K562 (cell line): ENCODE measurements at regions of chr6 and their contacts with region 1.

Region 1: GRCh38 chr6:130020907-130021629 is 2.7 kb downstream of the L3MBTL3 start:
- DNase-seq: peak; percentile 55 to 90 (median 57)
- ATAC-seq: peak; percentile 83
- H3K4me3 ChIP-seq: peak overlapping the region; percentile 60
- H3K27ac ChIP-seq: peak overlapping the region; percentile 62; the same call in 1 of the 3 replicates
- H3K4me1 ChIP-seq: peaks cover 0 to 15% of the 10 kb centered on the region in 2 experiments; a peak in 2 of 5 replicates
- H3K27me3 ChIP-seq: no peaks in the 10 kb centered on the region
- CTCF ChIP-seq: peak; percentile 77 to 92 (median 86)
- EP300 ChIP-seq: no peak
- POLR2A ChIP-seq: no peak
- RAD21 ChIP-seq: peak; percentile 87 to 88

Region 2: GRCh38 chr6:129644567-129645015 is 376.5 kb before region 1 on chr6:
- CTCF ChIA-PET with region 1: no interaction called
- POLR2A ChIA-PET with region 1: no interaction called
- in situ Hi-C with region 1: no loop called
- intact Hi-C with region 1: no loop called
- DNase-seq: no peak
- ATAC-seq: no peak
- H3K4me3 ChIP-seq: no peak overlapping the region
- H3K27ac ChIP-seq: no peak overlapping the region
- H3K4me1 ChIP-seq: peaks cover 3 to 14% of the 10 kb centered on the region in 2 experiments; a peak in 3 of 5 replicates
- H3K27me3 ChIP-seq: no peaks in the 10 kb centered on the region
- CTCF ChIP-seq: no peak
- EP300 ChIP-seq: no peak
- POLR2A ChIP-seq: no peak
- RAD21 ChIP-seq: no peak

Region 3: GRCh38 chr6:129766959-129767728 is 253.9 kb before region 1 on chr6:
- CTCF ChIA-PET with region 1: no interaction called
- POLR2A ChIA-PET with region 1: no interaction called
- in situ Hi-C with region 1: loop called (anchors 10 kb)
- intact Hi-C with region 1: loop called (anchors 5 kb)
- DNase-seq: peak; percentile 25 to 71 (median 37)
- ATAC-seq: peak; percentile 88
- H3K4me3 ChIP-seq: peak overlapping the region; percentile 42
- H3K27ac ChIP-seq: no peak overlapping the region
- H3K4me1 ChIP-seq: peaks cover 6 to 17% of the 10 kb centered on the region in 2 experiments; a peak in 4 of 5 replicates
- H3K27me3 ChIP-seq: no peaks in the 10 kb centered on the region
- CTCF ChIP-seq: no peak
- EP300 ChIP-seq: no peak
- POLR2A ChIP-seq: no peak
- RAD21 ChIP-seq: no peak

Region 4: DNA sequence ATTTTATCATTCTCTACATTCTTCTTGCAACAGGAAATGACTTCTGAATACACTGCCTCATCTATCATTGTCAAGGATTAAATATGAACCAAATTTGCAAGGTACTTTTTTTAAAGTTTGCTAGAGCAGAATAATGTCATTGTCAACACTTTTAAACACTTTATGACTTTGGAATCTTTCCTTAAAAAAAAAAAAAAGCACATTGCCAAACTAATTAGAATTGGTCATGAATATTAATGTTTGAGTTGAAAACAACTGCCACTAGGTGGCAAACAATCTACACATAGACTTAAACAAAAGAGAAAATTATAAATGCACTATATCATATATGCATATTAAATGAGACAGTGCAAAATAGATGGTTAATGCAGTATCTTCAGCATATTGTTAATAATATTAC is 127.4 kb before region 1 on chr6:
- CTCF ChIA-PET with region 1: interaction called, 10 read pairs
- POLR2A ChIA-PET with region 1: no interaction called
- in situ Hi-C with region 1: no loop called
- intact Hi-C with region 1: loop called (anchors 1 kb)
- DNase-seq: peak in 2 of 4 experiments; percentile 13 to 46
- ATAC-seq: 0 out of 3 replicates have a peak, but pooled peaks have one; percentile 44
- H3K4me3 ChIP-seq: no peak overlapping the region
- H3K27ac ChIP-seq: no peak overlapping the region
- H3K4me1 ChIP-seq: peaks cover 0 to 4% of the 10 kb centered on the region in 2 experiments; a peak in 1 of 5 replicates
- H3K27me3 ChIP-seq: no peaks in the 10 kb centered on the region; a peak in 1 of 5 replicates
- CTCF ChIP-seq: peak in 2 of 3 experiments; percentile 40 to 67; a peak in 3 of 6 replicates
- EP300 ChIP-seq: no peak
- POLR2A ChIP-seq: no peak
- RAD21 ChIP-seq: peak; percentile 36 to 66; a peak in 3 of 4 replicates

Region 5: GRCh38 chr6:129936329-129937165 is 84.5 kb before region 1 on chr6:
- CTCF ChIA-PET with region 1: no interaction called
- POLR2A ChIA-PET with region 1: no interaction called
- in situ Hi-C with region 1: no loop called
- intact Hi-C with region 1: loop called (anchors 2 kb)
- DNase-seq: peak; percentile 17 to 83 (median 24)
- ATAC-seq: peak; percentile 92
- H3K4me3 ChIP-seq: no peak overlapping the region
- H3K27ac ChIP-seq: no peak overlapping the region
- H3K4me1 ChIP-seq: no peaks in the 10 kb centered on the region; a peak in 1 of 5 replicates
- H3K27me3 ChIP-seq: no peaks in the 10 kb centered on the region; a peak in 1 of 5 replicates
- CTCF ChIP-seq: peak; percentile 64 to 78 (median 72)
- EP300 ChIP-seq: no peak
- POLR2A ChIP-seq: no peak
- RAD21 ChIP-seq: peak; percentile 77 to 82

Region 6: GRCh38 chr6:129954749-129955431 is 66.2 kb before region 1 on chr6:
- CTCF ChIA-PET with region 1: no interaction called
- POLR2A ChIA-PET with region 1: no interaction called
- in situ Hi-C with region 1: no loop called
- intact Hi-C with region 1: loop called (anchors 5 kb)
- DNase-seq: no peak
- ATAC-seq: no peak; the same call in 2 of the 3 replicates
- H3K4me3 ChIP-seq: no peak overlapping the region
- H3K27ac ChIP-seq: no peak overlapping the region
- H3K4me1 ChIP-seq: peaks cover 0 to 4% of the 10 kb centered on the region in 2 experiments; a peak in 1 of 5 replicates
- H3K27me3 ChIP-seq: peaks cover 0 to 17% of the 10 kb centered on the region in 2 experiments; a peak in 3 of 5 replicates
- CTCF ChIP-seq: no peak
- EP300 ChIP-seq: no peak
- POLR2A ChIP-seq: no peak
- RAD21 ChIP-seq: no peak